Head of caudate nucleus (tissue), 42 donors: ENCODE measurements at regions of chr4 and their contacts with region 1.

Region 1: DNA sequence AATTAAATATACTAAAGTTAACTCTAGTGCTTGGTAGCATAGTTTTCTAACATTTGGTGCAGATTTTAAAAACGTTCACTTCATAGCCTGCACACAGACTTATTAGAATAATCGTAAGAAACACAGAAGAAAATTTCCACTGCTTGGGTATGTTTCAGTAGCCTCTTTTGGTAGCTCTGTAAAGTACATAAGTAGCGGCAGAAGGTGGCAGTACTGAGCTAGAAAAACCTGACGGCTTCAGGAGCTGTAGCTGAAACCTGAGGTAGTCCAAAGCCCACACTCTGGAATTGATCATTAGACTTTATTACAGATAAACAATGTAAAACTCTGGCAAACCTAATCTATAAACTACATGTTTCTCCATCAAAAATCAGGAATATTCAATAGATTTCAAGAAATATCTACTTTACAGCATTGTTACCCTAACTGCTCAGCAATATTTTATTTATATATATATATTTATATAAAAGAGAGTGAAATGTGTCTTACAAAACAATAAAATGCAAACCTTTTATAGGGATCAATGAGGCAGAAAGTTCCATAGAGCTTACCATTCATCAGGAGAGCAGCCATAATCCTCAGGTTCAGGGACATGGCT is 88.2 kb downstream of the ATP8A1 start:
- DNase-seq: peak; percentile 10 to 92 (median 77)

Region 2: GRCh38 chr4:42656944-42657792 is 88.5 kb after region 1 on chr4 and contains the start of gene ATP8A1:
- intact Hi-C with region 1: loop called (anchors 5 kb)
- DNase-seq: peak; percentile 80 to 99 (median 95)

Region 3: DNA sequence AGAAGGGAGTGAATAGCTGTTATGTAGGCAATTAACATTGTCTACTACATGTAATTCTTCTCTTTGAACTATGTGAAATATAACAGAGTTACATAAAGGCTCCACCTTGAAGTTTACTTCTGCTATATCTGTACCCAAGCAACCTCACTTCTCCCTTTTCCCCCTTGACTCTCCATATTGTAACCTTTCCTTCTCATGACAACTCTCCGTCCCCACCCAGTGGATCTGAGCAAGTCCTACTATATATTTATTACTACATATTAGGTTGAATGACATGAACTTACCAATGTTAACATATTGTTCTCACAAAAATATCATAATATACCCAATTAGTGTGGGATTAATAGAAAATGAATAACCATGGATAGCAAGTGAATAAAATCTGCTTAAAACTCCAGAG is 181.4 kb after region 1 on chr4:
- intact Hi-C with region 1: loop called (anchors 10 kb)
- DNase-seq: peak in 28 of 42 donors; percentile 4 to 78 (median 38)

Region 4: DNA sequence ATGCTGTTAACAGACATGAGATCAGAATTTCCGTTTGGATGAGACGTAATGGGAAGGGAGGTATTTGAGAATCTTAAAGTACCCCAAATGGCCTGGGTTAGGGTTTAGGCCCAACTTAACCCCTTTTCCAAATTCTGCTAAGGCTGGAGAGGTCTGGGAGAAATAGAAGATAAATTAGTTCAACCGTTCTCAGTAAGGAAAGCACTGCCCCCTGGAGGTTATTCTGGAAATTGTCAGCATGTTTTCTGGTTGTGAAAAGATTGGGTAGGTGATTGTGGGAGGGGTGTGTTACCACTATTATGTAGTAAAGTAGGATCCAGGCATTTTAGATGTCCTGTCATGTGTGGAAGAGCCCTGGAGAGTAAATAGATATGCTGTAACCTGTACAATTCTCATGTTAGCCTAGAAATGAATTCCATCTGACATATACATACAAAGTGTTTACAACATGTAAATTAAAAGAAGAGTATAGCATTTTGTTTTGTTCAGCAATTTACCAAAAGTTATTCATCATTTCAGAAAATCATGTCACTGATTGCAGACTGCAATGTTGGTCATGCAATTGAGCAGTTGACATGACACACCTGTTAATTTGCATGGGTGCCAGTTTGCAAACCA is 297.0 kb after region 1 on chr4:
- intact Hi-C with region 1: loop called (anchors 5 kb)
- DNase-seq: peak in 35 of 42 donors; percentile 15 to 89 (median 62)